Ovary (tissue), 10 donors: ENCODE measurements at regions of chr5 and their contacts with region 1.

Region 1: DNA sequence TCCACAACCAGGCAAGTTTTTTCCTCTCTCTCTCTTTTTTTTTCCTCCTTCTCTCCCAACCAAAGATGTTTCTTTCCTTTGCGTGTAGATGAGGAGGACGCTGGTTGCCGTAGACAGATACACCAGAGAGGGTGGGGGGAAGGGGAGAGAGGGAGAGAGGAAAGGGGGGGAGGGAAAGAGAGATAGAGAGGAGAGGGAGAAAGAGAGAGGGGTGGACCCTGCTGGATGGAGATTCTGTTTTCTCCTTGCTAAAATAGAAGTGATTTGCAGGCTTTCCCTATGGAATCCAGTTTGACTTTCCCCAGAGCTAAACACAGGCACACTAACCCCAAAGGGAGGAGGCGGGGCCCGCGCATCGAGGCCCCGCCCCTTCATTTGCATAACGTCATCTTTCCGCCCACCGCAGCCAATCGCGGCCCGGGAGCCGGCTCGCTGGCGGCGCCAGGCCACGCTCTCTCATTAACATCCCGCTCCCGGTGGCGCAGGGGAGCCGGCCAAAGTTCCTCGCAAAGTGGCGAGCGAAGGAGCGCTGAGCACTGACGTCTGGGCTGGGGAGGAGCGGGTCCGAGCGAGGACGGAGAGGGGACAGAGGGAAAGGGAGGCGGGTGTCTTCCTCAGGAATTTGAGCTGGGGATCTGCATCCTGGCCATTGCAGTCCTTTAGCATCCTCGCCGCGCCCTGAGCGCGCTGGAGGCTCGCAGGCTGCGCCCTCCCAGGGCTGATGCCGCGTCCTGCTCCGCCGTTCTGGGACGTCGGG is 487 bp upstream of the EBF1 start:
- DNase-seq: peak; percentile 92 to 97 (median 95)
- H3K4me3 ChIP-seq: peak overlapping the region; percentile 64
- H3K27ac ChIP-seq: peak overlapping the region; percentile 64 to 93
- H3K4me1 ChIP-seq: peaks cover 13% of the 10 kb centered on the region
- H3K27me3 ChIP-seq: no peaks in the 10 kb centered on the region
- CTCF ChIP-seq: peak in 1 of 3 donors; percentile 32
- EP300 ChIP-seq: no peak
- POLR2A ChIP-seq: peak; percentile 96

Region 2: DNA sequence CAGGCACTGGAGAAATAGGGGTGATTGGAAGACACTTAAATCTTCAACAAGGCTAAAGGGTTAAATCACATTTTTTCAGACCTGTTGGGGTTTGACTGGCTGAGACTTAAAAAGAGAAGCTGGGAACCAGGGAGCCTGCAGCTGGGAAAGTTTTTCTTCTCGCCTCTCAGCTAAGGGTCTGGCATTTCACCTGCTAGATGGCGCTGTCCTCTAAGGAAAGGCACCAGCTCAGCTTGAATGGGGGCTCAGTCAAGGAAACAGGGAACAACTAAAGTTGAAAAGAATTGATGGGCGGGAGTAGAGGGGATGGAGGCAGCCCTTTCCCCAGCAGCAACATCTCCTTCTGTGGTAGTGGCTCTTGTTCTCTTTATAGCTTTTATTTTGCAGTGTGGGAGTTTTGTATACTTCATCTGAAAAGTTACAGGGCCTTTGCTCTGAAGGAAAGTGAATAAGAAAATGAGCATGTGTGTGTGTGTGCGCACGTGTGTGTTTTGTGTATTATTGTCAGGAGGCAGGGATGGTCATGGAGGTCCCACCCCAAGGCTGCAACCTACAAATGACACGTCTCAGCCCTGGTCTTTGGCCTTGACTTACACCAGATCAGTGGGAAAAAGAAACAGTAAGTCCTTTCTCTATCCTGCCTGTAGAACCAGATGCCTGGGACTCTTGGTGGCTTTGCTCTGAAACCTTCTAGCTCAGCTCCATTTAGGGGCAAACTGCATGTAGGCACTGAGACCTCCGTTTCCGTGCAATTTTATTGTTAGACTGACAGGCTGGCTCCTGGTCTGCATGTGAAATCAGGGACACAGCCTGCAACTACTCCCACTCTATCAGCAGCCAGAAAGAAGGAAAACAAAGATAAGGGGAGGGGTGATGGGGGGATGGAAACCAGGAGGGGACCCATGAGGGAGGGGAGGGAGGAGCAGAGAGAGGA is 925.0 kb before region 1 on chr5:
- intact Hi-C with region 1: loop called in 3 of 4 experiments (anchors 5 kb)
- DNase-seq: peak; percentile 83 to 90 (median 83)
- H3K4me3 ChIP-seq: no peak overlapping the region
- H3K27ac ChIP-seq: peak overlapping the region in 1 of 2 donors; percentile 1
- H3K4me1 ChIP-seq: peaks cover 4% of the 10 kb centered on the region
- H3K27me3 ChIP-seq: no peaks in the 10 kb centered on the region
- CTCF ChIP-seq: peak; percentile 58 to 91 (median 78)
- EP300 ChIP-seq: no peak
- POLR2A ChIP-seq: no peak

Region 3: DNA sequence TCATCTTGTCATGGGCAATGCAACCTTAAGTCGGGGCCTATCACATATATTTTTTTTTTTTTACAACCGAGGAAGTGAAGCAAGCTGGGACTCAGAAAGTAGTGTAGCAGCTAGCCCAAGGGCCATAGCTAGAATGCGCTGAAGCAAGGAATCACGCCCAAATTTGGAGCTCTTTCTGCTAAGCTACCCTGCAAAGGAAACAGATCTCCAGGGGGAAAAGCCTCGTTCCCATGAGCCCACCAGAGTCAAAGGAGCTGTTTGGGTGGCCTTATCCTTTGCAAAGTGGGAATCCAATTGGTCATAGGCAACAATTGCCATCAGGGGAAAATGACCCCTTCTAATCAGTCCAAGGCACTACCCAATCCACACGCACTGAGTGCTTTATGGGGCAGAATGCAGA is 390.9 kb before region 1 on chr5:
- intact Hi-C with region 1: loop called in 1 of 4 experiments (anchors 5 kb)
- DNase-seq: no peak
- H3K4me3 ChIP-seq: no peak overlapping the region
- H3K27ac ChIP-seq: no peak overlapping the region
- H3K4me1 ChIP-seq: no peaks in the 10 kb centered on the region
- H3K27me3 ChIP-seq: no peaks in the 10 kb centered on the region
- CTCF ChIP-seq: no peak
- EP300 ChIP-seq: no peak
- POLR2A ChIP-seq: no peak

Region 4: GRCh38 chr5:158770506-158770905 is 329.7 kb before region 1 on chr5:
- intact Hi-C with region 1: loop called in 2 of 4 experiments (anchors 10 kb)
- DNase-seq: no peak
- H3K4me3 ChIP-seq: no peak overlapping the region
- H3K27ac ChIP-seq: no peak overlapping the region
- H3K4me1 ChIP-seq: peaks cover 10% of the 10 kb centered on the region
- H3K27me3 ChIP-seq: no peaks in the 10 kb centered on the region
- CTCF ChIP-seq: no peak
- EP300 ChIP-seq: no peak
- POLR2A ChIP-seq: no peak

Region 5: DNA sequence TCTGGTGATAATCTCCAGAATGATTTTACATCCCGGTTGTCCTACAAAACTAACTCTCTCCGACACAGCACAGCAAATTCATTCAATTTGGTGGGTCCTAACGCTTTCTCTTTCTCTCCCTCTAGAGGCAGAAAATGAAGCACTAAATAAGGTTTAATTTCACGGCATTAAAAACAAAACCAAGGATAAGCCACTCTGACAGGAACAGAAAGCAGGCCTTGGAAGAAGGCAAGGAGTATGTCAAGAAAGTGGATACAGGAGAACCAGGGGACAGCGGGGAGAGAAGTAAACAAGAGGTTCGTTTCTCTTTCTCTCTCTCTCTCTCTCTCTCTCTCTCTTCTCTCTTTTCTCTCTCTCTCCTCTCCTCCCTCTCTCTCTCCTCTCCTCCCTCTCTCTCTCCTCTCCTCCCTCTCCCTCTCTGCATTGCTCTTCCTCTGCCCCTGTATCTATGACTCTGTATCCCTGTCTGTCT is 50.3 kb before region 1 on chr5:
- intact Hi-C with region 1: loop called in 2 of 4 experiments (anchors 5 kb)
- DNase-seq: peak in 2 of 5 donors; percentile 22 to 33
- H3K4me3 ChIP-seq: no peak overlapping the region
- H3K27ac ChIP-seq: peak overlapping the region; percentile 44 to 76
- H3K4me1 ChIP-seq: peaks cover 10% of the 10 kb centered on the region
- H3K27me3 ChIP-seq: no peaks in the 10 kb centered on the region
- CTCF ChIP-seq: peak; percentile 41 to 76 (median 64)
- EP300 ChIP-seq: no peak
- POLR2A ChIP-seq: peak; percentile 14